Dendritic cell treated with granulocyte-macrophage colony-stimulating factor and Interleukin-4, amounts not matched to agents 40 ng/mL and 50 ng/mL, for 4 days (primary cell): ENCODE measurements at regions of chr1 and their contacts with region 1.

Region 1: GRCh38 chr1:6028042-6028850 is 17.4 kb upstream of the KCNAB2 start:
- H3K4me3 Mint-ChIP-seq: peak overlapping the region; percentile 98
- H3K27ac Mint-ChIP-seq: peak overlapping the region; percentile 92
- H3K4me1 Mint-ChIP-seq: peaks cover 85% of the 10 kb centered on the region
- H3K27me3 Mint-ChIP-seq: no peaks in the 10 kb centered on the region

Region 2: DNA sequence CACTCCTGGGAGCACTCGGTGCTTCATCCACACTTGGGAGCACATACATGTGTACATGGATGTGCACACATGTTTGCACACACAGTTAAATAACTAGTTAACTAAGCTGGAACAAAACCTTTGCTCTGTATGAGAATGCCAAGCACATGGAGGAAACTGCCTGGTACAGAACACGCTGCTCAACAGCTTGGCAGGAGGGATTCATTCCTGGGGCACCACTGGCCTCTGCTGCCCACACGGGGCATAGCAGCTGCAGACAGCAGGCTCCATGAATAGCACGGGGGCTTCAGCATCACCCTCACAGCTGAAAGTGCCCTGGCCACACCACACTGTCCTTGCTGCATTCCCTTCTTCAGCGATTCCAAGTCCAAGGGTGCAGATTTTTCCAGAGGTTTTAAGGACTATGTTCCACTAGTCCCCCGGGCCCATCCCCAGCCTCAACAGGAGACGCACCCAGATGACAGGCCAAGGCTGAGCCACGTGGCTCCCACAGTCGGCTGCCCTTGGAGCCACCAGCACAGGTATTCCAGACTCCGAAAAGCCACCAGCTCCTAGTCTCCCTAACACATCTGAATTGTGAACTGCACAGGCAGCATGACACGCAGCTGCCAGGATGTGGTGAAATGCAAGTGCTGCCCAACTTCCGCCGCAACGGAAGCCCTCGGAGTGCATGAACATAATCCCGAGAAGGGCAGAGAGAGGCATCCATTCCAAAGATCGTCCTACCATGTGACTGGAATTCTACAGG is 52.9 kb before region 1 on chr1:
- intact Hi-C with region 1: no loop called
- H3K4me3 Mint-ChIP-seq: no peak overlapping the region
- H3K27ac Mint-ChIP-seq: no peak overlapping the region
- H3K4me1 Mint-ChIP-seq: peaks cover 20% of the 10 kb centered on the region
- H3K27me3 Mint-ChIP-seq: no peaks in the 10 kb centered on the region

Region 3: GRCh38 chr1:5992026-5992813 is 36.0 kb before region 1 on chr1 and contains the start of gene NPHP4:
- intact Hi-C with region 1: loop called (anchors 2 kb)
- H3K4me3 Mint-ChIP-seq: peak within 1 kb of the TSS; percentile 72
- H3K27ac Mint-ChIP-seq: peak within 1 kb of the TSS; percentile 90
- H3K4me1 Mint-ChIP-seq: peaks cover 37% of the 10 kb centered on the region
- H3K27me3 Mint-ChIP-seq: peaks cover 1% of the 10 kb centered on the region